Activated T-helper 1 cell treated with anti-CD3 and anti-CD28 coated beads, Interleukin-12 subunit alpha, Interleukin-12 subunit beta, Interleukin-2, Interleukin-4 antibody, amounts not matched to agents 30 ng/mL and 10 ng/mL and 1 ng/mL, durations not matched to agents 14 hours and 24 hours and 36 hours (primary cell): ENCODE measurements at regions of chr6 and their contacts with region 1.

Region 1: DNA sequence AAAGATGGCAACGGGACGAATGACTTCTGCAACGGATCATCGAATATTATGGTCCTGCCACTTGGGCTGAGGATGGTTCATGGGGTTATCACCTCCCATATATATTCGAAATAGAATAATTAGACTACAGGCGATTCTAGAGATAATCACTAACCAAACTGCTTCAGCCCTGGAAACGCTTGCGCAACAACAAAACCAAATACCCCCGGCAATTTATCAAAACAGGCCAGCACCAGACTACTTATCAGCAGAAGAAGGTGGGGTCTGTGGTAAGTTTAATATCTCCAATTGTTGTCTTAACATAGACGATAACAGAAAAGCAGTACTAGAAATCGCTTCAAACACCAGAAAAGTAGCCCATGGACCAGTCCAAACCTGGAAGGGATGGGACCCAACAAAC is 31.0 kb upstream of the ULBP3 start:
- DNase-seq: no peak
- H3K4me3 Mint-ChIP-seq: no peak overlapping the region
- H3K27ac Mint-ChIP-seq: no peak overlapping the region
- H3K4me1 Mint-ChIP-seq: no peaks in the 10 kb centered on the region
- H3K27me3 Mint-ChIP-seq: no peaks in the 10 kb centered on the region

Region 2: DNA sequence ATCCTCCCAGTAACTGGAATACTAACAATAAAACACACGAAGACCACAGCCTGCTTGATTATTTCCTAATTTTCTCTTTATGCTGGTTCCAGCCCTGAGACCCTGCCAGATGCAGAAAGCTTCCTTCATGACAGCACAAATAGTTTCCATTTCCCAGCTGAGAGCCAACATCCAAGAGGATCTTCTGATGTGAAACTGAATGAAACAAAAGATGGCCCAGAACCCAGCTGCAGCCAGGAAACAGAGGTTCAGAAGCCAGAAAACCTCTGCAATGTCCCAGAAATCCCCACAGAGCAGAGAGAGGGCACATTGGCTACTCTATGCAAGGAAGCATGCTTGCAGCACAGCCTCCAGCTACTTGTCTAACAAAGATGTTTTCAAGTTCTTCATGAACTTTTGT is 437.9 kb after region 1 on chr6:
- intact Hi-C with region 1: loop called (anchors 10 kb)
- DNase-seq: no peak
- H3K4me3 Mint-ChIP-seq: no peak overlapping the region
- H3K27ac Mint-ChIP-seq: no peak overlapping the region
- H3K4me1 Mint-ChIP-seq: no peaks in the 10 kb centered on the region
- H3K27me3 Mint-ChIP-seq: peaks cover 8% of the 10 kb centered on the region